ENCODE measurements at regions of chr2 and their contacts with region 1.

Region 1: DNA sequence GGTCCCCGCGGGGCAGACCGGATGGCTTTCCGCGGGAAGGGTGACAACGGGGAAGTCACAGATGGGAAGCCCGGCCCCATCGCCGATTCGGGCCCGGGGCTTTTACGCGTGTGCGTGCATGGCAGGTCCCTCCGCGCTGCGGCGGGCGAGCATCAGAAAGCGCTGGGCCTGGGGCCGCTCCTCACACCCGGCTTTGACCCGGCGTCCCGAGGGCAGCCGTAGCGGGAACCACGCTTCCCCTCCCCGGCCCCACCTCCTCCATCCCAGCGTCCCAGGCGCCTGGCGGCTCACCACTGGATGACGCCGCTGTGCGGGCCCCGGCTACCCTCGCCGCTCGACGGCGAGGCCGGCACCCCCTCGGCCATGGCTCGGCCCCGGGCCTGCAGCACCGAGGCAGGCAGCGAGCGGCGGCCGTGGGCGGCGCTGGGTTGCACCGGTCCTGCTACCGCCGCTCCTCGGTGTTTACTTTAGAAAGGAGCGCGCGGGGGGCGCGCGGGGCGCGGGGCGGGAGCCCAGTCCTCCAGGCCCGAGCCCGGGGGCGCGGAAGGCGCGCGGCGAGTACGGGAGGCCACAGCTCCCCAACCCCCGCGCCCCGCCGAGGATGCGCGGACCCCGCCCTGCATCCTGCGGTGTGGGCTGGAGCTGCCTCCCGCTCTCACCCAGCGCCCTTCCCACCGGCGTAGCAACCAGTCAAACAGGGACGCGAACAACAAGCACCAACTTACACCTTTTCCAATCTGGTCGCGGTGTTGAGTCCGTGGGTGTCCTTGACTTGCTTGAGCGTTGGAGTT is 806 bp downstream of the RFX8 start:
- DNase-seq: peak; percentile 52
- H3K4me3 Mint-ChIP-seq: peak overlapping the region; percentile 84
- H3K27ac Mint-ChIP-seq: peak overlapping the region; percentile 86
- H3K4me1 Mint-ChIP-seq: peaks cover 62% of the 10 kb centered on the region
- H3K27me3 Mint-ChIP-seq: no peaks in the 10 kb centered on the region

Region 2: GRCh38 chr2:101442042-101442666 is 32.0 kb before region 1 on chr2:
- intact Hi-C with region 1: loop called (anchors 1 kb)
- DNase-seq: no peak
- H3K4me3 Mint-ChIP-seq: no peak overlapping the region
- H3K27ac Mint-ChIP-seq: peak overlapping the region; percentile 0
- H3K4me1 Mint-ChIP-seq: peaks cover 22% of the 10 kb centered on the region
- H3K27me3 Mint-ChIP-seq: no peaks in the 10 kb centered on the region

Region 3: GRCh38 chr2:101518578-101519492 is 44.7 kb after region 1 on chr2:
- intact Hi-C with region 1: loop called (anchors 2 kb)
- DNase-seq: no peak
- H3K4me3 Mint-ChIP-seq: no peak overlapping the region
- H3K27ac Mint-ChIP-seq: no peak overlapping the region
- H3K4me1 Mint-ChIP-seq: peaks cover 51% of the 10 kb centered on the region
- H3K27me3 Mint-ChIP-seq: no peaks in the 10 kb centered on the region

Region 4: GRCh38 chr2:101655702-101656422 is 181.8 kb after region 1 on chr2:
- intact Hi-C with region 1: loop called (anchors 1 kb)
- DNase-seq: no peak
- H3K4me3 Mint-ChIP-seq: no peak overlapping the region
- H3K27ac Mint-ChIP-seq: no peak overlapping the region
- H3K4me1 Mint-ChIP-seq: peaks cover 18% of the 10 kb centered on the region
- H3K27me3 Mint-ChIP-seq: no peaks in the 10 kb centered on the region

Region 5: GRCh38 chr2:101770726-101771125 is 296.6 kb after region 1 on chr2:
- intact Hi-C with region 1: loop called (anchors 5 kb)
- DNase-seq: no peak
- H3K4me3 Mint-ChIP-seq: no peak overlapping the region
- H3K27ac Mint-ChIP-seq: no peak overlapping the region
- H3K4me1 Mint-ChIP-seq: peaks cover 91% of the 10 kb centered on the region
- H3K27me3 Mint-ChIP-seq: no peaks in the 10 kb centered on the region